PC-3 (cell line): ENCODE measurements at regions of chr2 and their contacts with region 1.

Region 1: DNA sequence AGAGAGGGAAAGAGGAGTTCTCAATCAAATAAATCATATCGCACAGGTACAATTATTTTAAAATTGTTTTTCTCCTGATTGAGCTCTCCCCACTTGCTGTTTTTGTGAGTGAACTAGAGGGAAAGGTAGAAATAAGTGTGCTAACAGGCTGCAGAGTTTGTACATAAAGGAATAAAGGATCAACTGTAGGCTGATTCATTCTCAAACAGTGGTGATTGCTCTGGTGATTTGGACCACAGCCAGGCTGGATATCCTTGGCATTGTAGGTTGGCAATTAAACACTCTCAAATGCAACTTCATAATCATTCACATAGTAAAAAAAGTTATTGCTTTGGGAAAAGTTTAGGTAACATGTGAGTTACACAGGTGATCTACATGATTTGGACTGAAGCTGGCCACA is 29.8 kb downstream of the LRP1B start:
- DNase-seq: peak; percentile 28
- ATAC-seq: peak; percentile 70
- H3K4me3 ChIP-seq: no peak overlapping the region
- H3K27ac ChIP-seq: no peak overlapping the region
- H3K4me1 ChIP-seq: no peaks in the 10 kb centered on the region
- H3K27me3 ChIP-seq: no peaks in the 10 kb centered on the region
- CTCF ChIP-seq: no peak

Region 2: GRCh38 chr2:142041105-142041504 is 59.9 kb before region 1 on chr2:
- CTCF ChIA-PET with region 1: no interaction called
- POLR2A ChIA-PET with region 1: no interaction called
- intact Hi-C with region 1: loop called (anchors 2 kb)
- DNase-seq: peak; percentile 64
- ATAC-seq: peak; percentile 62
- H3K4me3 ChIP-seq: no peak overlapping the region
- H3K27ac ChIP-seq: peak overlapping the region; percentile 61
- H3K4me1 ChIP-seq: peaks cover 24% of the 10 kb centered on the region
- H3K27me3 ChIP-seq: no peaks in the 10 kb centered on the region
- CTCF ChIP-seq: no peak